Activated naive CD4-positive, alpha-beta T cell treated with anti-CD3 and anti-CD28 coated beads for 36 hours (primary cell): ENCODE measurements at regions of chr11 and their contacts with region 1.

Region 1: GRCh38 chr11:67401495-67402191 is at the start of gene PPP1CA:
- DNase-seq: peak; percentile 91
- H3K4me3 Mint-ChIP-seq: peak within 1 kb of the TSS; percentile 72
- H3K27ac Mint-ChIP-seq: peak within 1 kb of the TSS; percentile 92
- H3K4me1 Mint-ChIP-seq: peaks cover 60% of the 10 kb centered on the region
- H3K27me3 Mint-ChIP-seq: no peaks in the 10 kb centered on the region
- total RNA-seq, gene PPP1CA: 202 to 204 TPM

Region 2: GRCh38 chr11:67353317-67354074 is 48.1 kb before region 1 on chr11 and contains the start of gene POLD4:
- CTCF ChIA-PET with region 1: interaction called, 13 read pairs
- intact Hi-C with region 1: loop called (anchors 1 kb)
- DNase-seq: peak; percentile 97
- H3K4me3 Mint-ChIP-seq: peak within 1 kb of the TSS; percentile 92
- H3K27ac Mint-ChIP-seq: peak within 1 kb of the TSS; percentile 97
- H3K4me1 Mint-ChIP-seq: peaks cover 54% of the 10 kb centered on the region
- H3K27me3 Mint-ChIP-seq: no peaks in the 10 kb centered on the region
- total RNA-seq, gene POLD4: 40.7 to 42.0 TPM

Region 3: DNA sequence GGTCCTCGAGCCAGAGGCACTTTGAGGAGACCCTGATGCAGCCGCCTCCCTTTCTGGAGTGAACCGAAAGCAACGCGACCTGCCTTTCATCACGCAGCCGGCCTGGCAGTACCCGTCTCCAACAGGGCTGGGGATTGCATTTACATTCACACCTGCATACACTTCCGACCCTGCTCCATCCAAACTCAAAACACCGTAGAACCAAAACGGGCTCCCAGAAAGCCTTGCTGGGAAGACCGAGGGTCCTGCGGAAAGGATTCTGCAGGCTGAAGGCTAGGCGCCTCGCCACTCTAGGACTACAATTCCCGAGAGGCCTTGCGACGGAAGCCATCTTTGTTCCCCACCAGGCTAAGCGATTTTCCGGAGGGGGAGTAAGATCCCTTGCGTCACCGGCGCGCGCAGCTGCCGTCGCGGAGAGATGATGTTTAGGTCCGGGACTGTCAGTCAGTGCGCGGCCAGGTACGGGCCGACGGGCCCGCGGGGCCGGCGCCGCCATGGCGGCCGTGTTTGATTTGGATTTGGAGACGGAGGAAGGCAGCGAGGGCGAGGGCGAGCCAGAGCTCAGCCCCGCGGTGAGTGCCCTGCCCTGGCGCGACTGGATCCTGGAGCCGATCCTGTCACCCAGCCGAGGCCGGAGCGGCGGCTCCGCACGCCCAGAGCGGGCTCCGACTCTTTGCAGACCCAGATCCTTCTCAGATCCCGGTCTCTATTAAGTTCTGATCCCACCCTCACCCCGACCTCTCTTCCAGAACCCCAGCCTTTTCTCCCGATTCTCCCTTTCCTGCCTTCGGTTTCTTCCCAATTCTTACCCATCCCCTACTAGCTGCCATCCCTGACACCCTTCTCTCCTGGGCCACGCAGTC is 26.6 kb after region 1 on chr11 and contains the start of gene RPS6KB2:
- CTCF ChIA-PET with region 1: interaction called, 7 read pairs
- intact Hi-C with region 1: loop called (anchors 1 kb)
- DNase-seq: peak; percentile 100
- H3K4me3 Mint-ChIP-seq: peak within 1 kb of the TSS; percentile 98
- H3K27ac Mint-ChIP-seq: peak within 1 kb of the TSS; percentile 97
- H3K4me1 Mint-ChIP-seq: peaks cover 34% of the 10 kb centered on the region
- H3K27me3 Mint-ChIP-seq: no peaks in the 10 kb centered on the region
- total RNA-seq, gene RPS6KB2: 50.7 to 51.2 TPM

Region 4: GRCh38 chr11:67468835-67469811 is 67.5 kb after region 1 on chr11 and contains the start of gene TMEM134:
- CTCF ChIA-PET with region 1: interaction called, 7 read pairs
- intact Hi-C with region 1: loop called (anchors 1 kb)
- DNase-seq: peak; percentile 92
- H3K4me3 Mint-ChIP-seq: peak within 1 kb of the TSS; percentile 80
- H3K27ac Mint-ChIP-seq: peak within 1 kb of the TSS; percentile 86
- H3K4me1 Mint-ChIP-seq: peaks cover 33% of the 10 kb centered on the region
- H3K27me3 Mint-ChIP-seq: no peaks in the 10 kb centered on the region
- total RNA-seq, gene TMEM134: 52.6 to 56.1 TPM

Region 5: DNA sequence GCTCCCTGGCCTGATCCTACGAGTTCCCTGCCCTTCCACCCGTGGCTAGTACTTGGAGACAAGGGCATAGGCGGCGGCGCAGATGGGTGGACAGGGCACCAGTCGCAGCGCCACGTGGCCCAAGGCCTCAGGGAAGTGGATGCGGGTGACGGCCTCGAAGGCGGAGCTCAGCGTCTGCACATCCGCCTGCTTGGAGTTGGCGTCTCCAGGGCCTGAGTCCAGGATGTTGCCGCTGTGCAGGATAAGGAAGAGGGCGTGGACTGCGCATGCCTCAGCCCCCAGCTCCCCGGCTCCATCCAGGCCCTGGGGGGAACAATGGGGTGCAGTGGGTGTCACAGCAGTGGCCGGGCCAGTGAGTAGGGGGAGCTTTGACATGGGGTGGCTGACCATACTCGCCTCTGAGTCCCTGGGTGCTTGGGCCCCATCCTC is 96.9 kb after region 1 on chr11:
- CTCF ChIA-PET with region 1: no interaction called
- intact Hi-C with region 1: no loop called
- DNase-seq: no peak
- H3K4me3 Mint-ChIP-seq: no peak overlapping the region
- H3K27ac Mint-ChIP-seq: no peak overlapping the region
- H3K4me1 Mint-ChIP-seq: peaks cover 21% of the 10 kb centered on the region
- H3K27me3 Mint-ChIP-seq: no peaks in the 10 kb centered on the region

Region 6: GRCh38 chr11:67606492-67607201 is 205.0 kb after region 1 on chr11 and contains the start of gene NDUFV1:
- CTCF ChIA-PET with region 1: no interaction called
- intact Hi-C with region 1: loop called (anchors 5 kb)
- DNase-seq: peak; percentile 97
- H3K4me3 Mint-ChIP-seq: peak within 1 kb of the TSS; percentile 90
- H3K27ac Mint-ChIP-seq: peak within 1 kb of the TSS; percentile 85
- H3K4me1 Mint-ChIP-seq: peaks cover 17% of the 10 kb centered on the region
- H3K27me3 Mint-ChIP-seq: peaks cover 6% of the 10 kb centered on the region
- total RNA-seq, gene NDUFV1: 347 to 356 TPM